Activated naive CD8-positive, alpha-beta T cell treated with anti-CD3 and anti-CD28 coated beads, Interleukin-2, amount 10 ng/mL, durations not matched to agents 7 days and 5 days (primary cell): ENCODE measurements at regions of chr6 and their contacts with region 1.

Region 1: GRCh38 chr6:2988426-2989331 is 11.0 kb upstream of the NQO2 start:
- DNase-seq: peak; percentile 87
- ATAC-seq: peak; percentile 74
- H3K4me3 Mint-ChIP-seq: peak overlapping the region; percentile 87
- H3K27ac Mint-ChIP-seq: peak overlapping the region; percentile 94
- H3K4me1 Mint-ChIP-seq: peaks cover 20% of the 10 kb centered on the region
- H3K27me3 Mint-ChIP-seq: no peaks in the 10 kb centered on the region

Region 2: GRCh38 chr6:2765166-2765895 is 223.3 kb before region 1 on chr6 and contains the start of gene WRNIP1:
- POLR2A ChIA-PET with region 1: interaction called, 22 read pairs
- DNase-seq: peak; percentile 95
- ATAC-seq: peak; percentile 89
- H3K4me3 Mint-ChIP-seq: peak within 1 kb of the TSS; percentile 94
- H3K27ac Mint-ChIP-seq: peak within 1 kb of the TSS; percentile 95
- H3K4me1 Mint-ChIP-seq: peaks cover 41% of the 10 kb centered on the region
- H3K27me3 Mint-ChIP-seq: no peaks in the 10 kb centered on the region
- total RNA-seq, gene WRNIP1: 45.4 to 46.7 TPM

Region 3: DNA sequence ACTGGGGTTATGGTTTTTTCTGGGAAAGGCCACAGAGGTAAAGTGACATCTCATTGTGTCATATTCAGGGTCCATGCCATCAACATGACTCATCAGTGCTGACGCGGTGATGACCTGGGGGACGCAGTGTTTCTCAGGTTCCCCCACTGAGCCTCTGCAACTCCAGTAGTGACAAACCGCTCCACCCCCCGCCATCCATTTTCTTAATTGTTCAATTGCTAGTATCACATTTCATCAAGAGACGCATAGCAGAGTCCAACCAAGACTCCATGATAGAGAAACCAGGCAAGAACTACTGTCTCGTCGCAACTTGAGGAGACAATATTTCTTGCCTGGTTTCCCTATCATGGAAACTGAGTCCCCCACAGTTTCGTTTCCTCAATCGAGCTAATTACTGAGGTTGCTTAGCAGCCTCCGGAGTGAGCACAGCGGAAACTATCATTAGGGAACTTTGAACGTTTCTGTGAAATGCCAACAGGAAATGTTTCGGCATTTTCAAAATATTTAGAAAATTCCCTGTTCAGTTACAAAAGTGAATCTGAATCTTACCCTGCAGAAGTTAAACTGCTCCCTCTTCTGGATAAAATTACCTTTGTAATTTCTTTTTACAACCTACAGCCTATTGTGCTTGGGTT is 134.8 kb before region 1 on chr6:
- POLR2A ChIA-PET with region 1: interaction called, 19 read pairs
- DNase-seq: peak; percentile 67
- ATAC-seq: peak; percentile 46
- H3K4me3 Mint-ChIP-seq: peak overlapping the region; percentile 60
- H3K27ac Mint-ChIP-seq: peak overlapping the region; percentile 95
- H3K4me1 Mint-ChIP-seq: peaks cover 66% of the 10 kb centered on the region
- H3K27me3 Mint-ChIP-seq: no peaks in the 10 kb centered on the region

Region 4: DNA sequence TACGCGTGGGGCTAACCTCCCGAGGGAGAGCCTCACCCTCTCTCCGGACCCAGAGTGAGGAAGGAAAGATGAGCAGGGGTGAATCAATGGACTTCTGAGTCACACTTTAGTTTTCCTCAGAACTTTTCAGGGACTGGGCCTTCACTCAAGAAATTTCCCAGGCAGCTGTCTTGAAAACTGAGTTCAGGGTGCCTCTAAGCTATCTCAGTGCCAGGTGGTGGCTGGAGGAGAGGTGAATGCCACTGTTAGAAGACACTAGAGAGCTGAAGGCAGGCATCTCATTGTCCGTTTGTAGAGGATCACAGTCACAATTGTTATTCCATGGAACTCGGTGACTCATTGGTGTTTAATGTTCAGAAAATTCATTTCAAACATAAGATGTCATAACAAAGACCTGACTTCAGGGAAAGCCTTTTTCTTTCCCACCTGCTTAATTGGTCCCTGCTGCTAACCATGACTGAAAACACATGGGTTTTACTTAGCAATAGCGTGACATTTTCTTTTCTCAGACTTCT is 12.1 kb before region 1 on chr6:
- POLR2A ChIA-PET with region 1: interaction called, 32 read pairs
- DNase-seq: no peak
- ATAC-seq: no peak
- H3K4me3 Mint-ChIP-seq: no peak overlapping the region
- H3K27ac Mint-ChIP-seq: no peak overlapping the region
- H3K4me1 Mint-ChIP-seq: peaks cover 8% of the 10 kb centered on the region
- H3K27me3 Mint-ChIP-seq: peaks cover 10% of the 10 kb centered on the region

Region 5: DNA sequence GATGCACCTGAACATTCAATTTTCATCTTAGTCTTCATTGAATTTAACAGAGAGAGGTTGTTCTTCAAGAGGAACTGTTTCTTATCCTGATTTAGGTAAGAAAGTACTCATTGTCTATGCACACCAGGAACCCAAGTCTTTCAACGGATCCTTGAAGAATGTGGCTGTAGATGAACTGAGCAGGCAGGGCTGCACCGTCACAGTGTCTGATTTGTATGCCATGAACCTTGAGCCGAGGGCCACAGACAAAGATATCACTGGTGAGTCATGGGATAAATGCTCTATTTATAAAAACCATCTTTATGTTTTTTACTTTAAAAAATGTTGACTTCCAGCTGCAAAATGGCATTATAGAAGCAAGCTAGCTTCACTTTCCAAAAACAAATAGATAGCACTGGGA is 21.3 kb after region 1 on chr6:
- POLR2A ChIA-PET with region 1: no interaction called
- DNase-seq: no peak
- ATAC-seq: no peak
- H3K4me3 Mint-ChIP-seq: no peak overlapping the region
- H3K27ac Mint-ChIP-seq: no peak overlapping the region
- H3K4me1 Mint-ChIP-seq: peaks cover 8% of the 10 kb centered on the region
- H3K27me3 Mint-ChIP-seq: no peaks in the 10 kb centered on the region

Region 6: DNA sequence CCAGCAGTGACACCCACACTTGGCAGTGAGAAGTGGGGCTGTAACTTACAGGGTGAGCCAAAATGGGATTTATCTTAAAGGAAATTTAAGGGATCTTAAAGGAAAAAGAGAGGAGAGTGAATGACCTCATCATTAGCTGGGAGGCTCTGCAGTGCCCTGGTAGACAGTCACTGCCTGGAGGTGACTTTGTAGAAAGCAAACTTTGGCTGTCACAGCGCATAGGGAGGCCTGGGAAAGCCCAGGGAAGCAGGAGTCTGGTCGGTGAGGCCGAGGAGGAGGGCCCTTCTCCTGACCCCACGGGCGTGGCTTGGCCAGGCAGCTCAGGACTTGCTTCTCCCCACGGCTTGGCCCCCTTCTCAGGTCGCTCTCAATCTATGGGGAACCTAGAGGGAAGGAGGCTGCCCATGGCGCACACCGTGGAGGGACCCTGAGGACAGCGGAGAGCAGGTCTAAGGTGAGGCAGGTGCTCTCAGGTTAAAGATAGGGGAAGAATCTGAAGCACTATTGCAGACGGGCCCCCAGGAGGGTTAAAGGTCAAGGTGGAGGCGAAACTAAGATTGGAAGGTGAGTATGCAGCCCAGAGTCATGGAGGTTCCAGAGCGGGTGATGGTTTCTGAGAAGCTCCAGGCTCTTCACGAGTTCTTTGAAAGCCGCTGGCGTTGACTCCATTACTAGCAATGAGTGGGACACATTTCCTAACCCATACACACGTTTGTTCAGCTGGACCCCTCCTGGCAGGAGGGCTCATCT is 64.0 kb after region 1 on chr6:
- POLR2A ChIA-PET with region 1: interaction called, 22 read pairs
- DNase-seq: no peak
- ATAC-seq: no peak
- H3K4me3 Mint-ChIP-seq: peak overlapping the region; percentile 73
- H3K27ac Mint-ChIP-seq: peak overlapping the region; percentile 70
- H3K4me1 Mint-ChIP-seq: peaks cover 23% of the 10 kb centered on the region
- H3K27me3 Mint-ChIP-seq: peaks cover 23% of the 10 kb centered on the region

Region 7: GRCh38 chr6:3108746-3109414 is 120.2 kb after region 1 on chr6:
- POLR2A ChIA-PET with region 1: interaction called, 11 read pairs
- DNase-seq: no peak
- ATAC-seq: no peak
- H3K4me3 Mint-ChIP-seq: no peak overlapping the region
- H3K27ac Mint-ChIP-seq: no peak overlapping the region
- H3K4me1 Mint-ChIP-seq: peaks cover 3% of the 10 kb centered on the region
- H3K27me3 Mint-ChIP-seq: no peaks in the 10 kb centered on the region